Activated CD4-positive, alpha-beta T cell treated with anti-CD3 and anti-CD28 coated beads, Interleukin-2, amount 10 ng/mL, durations not matched to agents 24 days and 14 days (primary cell): ENCODE measurements at regions of chr19 and their contacts with region 1.

Region 1: GRCh38 chr19:48588670-48589399 is 17.7 kb upstream of the SPACA4 start:
- DNase-seq: peak; percentile 96
- H3K4me3 Mint-ChIP-seq: peak overlapping the region; percentile 65
- H3K27ac Mint-ChIP-seq: peak overlapping the region; percentile 86
- H3K4me1 Mint-ChIP-seq: peaks cover 26% of the 10 kb centered on the region
- H3K27me3 Mint-ChIP-seq: no peaks in the 10 kb centered on the region

Region 2: GRCh38 chr19:48310227-48310626 is 278.6 kb before region 1 on chr19:
- intact Hi-C with region 1: loop called (anchors 10 kb)
- DNase-seq: no peak
- H3K4me3 Mint-ChIP-seq: no peak overlapping the region
- H3K27ac Mint-ChIP-seq: no peak overlapping the region
- H3K4me1 Mint-ChIP-seq: no peaks in the 10 kb centered on the region
- H3K27me3 Mint-ChIP-seq: peaks cover 6% of the 10 kb centered on the region

Region 3: GRCh38 chr19:48492925-48493717 is 95.7 kb before region 1 on chr19:
- intact Hi-C with region 1: loop called (anchors 1 kb)
- DNase-seq: peak; percentile 95
- H3K4me3 Mint-ChIP-seq: peak overlapping the region; percentile 83
- H3K27ac Mint-ChIP-seq: peak overlapping the region; percentile 65
- H3K4me1 Mint-ChIP-seq: peaks cover 30% of the 10 kb centered on the region
- H3K27me3 Mint-ChIP-seq: peaks cover 36% of the 10 kb centered on the region

Region 4: DNA sequence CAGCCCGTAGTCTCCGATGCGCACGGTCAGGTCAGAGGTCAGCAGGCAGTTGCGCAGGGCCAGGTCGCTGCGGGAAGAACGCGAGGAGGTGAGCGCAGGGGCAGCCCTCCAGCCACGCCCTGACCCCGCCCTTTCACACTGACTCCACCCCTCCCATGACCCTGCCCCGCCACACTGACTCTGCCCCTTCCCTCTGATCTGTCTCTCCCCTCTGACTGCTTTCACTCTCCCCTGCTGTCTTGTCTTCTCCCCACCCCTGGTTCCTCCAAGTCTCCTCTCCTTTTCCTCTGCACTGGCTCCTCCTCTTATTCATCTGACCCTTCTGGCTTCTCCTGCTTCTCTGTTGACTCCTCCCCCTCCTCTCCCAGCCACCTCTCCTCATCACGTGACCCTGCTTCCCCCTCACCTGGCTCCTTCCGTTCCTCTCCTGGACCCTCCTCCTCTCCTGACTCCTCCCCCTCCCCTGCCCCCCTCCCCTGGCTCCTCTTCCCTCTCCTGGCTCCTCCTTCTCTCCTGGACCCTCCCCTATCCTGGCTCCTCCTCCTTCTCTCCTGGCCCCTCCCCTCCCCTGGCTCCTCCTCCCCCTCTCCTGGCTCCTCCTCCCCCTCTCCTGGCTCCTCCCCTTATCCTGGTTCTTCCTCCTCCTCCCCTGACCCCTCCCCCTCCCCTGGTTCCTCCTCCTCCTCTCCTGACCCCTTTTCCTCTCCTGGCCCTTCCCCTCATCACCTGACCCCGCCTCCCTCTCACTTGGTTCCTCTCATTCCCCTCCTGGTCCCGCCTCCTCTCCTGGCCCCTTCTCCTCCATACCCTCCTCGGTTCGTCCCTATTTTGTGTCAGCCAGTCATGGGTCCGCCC is 87.1 kb before region 1 on chr19:
- intact Hi-C with region 1: loop called (anchors 1 kb)
- DNase-seq: peak; percentile 92
- H3K4me3 Mint-ChIP-seq: peak overlapping the region; percentile 85
- H3K27ac Mint-ChIP-seq: peak overlapping the region; percentile 68
- H3K4me1 Mint-ChIP-seq: peaks cover 12% of the 10 kb centered on the region
- H3K27me3 Mint-ChIP-seq: peaks cover 2% of the 10 kb centered on the region

Region 5: GRCh38 chr19:48553676-48554386 is 35.0 kb before region 1 on chr19:
- intact Hi-C with region 1: no loop called
- DNase-seq: no peak
- H3K4me3 Mint-ChIP-seq: no peak overlapping the region
- H3K27ac Mint-ChIP-seq: no peak overlapping the region
- H3K4me1 Mint-ChIP-seq: peaks cover 2% of the 10 kb centered on the region
- H3K27me3 Mint-ChIP-seq: peaks cover 2% of the 10 kb centered on the region